H1 (cell line): ENCODE measurements at regions of chr16 and their contacts with region 1.

Region 1: DNA sequence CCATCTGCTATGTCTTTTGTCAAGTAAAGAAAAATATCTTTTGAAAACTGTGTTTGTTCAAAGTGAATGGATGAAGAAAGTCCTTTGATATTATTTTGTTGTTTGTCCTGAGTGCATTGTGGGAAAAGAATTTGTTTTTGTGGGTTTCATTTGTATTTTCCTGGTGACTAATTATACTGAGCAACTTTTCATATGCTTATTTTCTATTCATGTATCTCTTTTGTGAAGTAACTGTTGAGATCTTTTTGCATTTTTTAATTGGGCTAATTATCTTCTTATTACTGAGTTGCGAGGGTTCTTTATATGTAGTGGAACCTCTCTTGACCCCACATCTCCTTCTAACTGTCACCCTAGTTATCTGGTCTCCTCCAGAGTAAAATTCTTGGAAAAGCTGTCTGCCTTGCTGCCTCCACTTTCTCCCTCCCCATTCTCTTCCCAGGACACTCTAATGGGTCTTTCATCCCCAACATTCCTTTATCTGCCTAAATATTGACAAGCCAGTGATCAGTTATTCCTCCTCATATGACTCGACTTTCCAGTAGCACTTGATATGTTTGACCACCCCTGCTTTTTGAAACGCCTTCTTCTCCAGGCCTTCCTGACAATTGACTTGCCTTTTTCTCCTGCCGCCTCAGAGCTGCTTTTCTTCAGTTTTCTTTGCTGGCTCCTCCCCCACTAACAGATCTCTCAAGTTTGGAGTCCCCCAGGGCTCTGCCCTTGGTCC is 117.6 kb upstream of the HAS3 start:
- DNase-seq: no peak
- H3K4me3 ChIP-seq: no peak overlapping the region
- H3K27ac ChIP-seq: no peak overlapping the region
- H3K4me1 ChIP-seq: peaks cover 0 to 9% (median 5%) of the 10 kb centered on the region in 4 experiments; a peak in 2 of 7 replicates
- H3K27me3 ChIP-seq: no peaks in the 10 kb centered on the region
- CTCF ChIP-seq: no peak
- EP300 ChIP-seq: no peak
- POLR2A ChIP-seq: no peak
- RAD21 ChIP-seq: no peak; a peak in 1 of 4 replicates

Region 2: GRCh38 chr16:68972720-68973119 is 15.2 kb before region 1 on chr16:
- CTCF ChIA-PET with region 1: interaction called, 34 read pairs
- POLR2A ChIA-PET with region 1: interaction called, 6 read pairs
- DNase-seq: peak; percentile 63 to 67
- H3K4me3 ChIP-seq: peak overlapping the region in 1 of 4 experiments; percentile 25; a peak in 3 of 8 replicates
- H3K27ac ChIP-seq: no peak overlapping the region
- H3K4me1 ChIP-seq: peaks cover 10 to 20% (median 11%) of the 10 kb centered on the region in 4 experiments
- H3K27me3 ChIP-seq: no peaks in the 10 kb centered on the region
- CTCF ChIP-seq: peak; percentile 48 to 63 (median 60)
- EP300 ChIP-seq: no peak
- POLR2A ChIP-seq: no peak
- RAD21 ChIP-seq: peak; percentile 47 to 49

Region 3: DNA sequence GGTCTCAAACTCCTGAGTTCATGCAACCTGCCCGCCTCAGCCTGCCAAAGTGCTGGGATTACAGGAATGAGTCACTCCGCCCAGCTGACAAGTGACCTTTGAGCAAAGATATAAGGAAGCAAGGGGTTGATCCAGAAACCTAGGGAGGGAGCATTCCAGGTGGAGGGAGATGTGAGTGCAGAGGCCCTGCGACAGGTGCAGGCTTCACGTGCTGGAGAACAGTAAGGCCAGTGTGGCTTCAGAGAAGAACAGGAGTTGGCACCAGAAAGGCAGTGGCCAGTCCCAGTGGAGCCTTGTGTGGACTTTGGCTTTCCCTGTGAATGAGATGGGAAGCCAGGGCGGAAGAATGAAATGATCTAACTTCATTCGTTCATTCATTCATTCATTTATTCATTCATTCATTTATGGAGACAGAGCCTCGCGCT is 44.0 kb after region 1 on chr16:
- CTCF ChIA-PET with region 1: interaction called, 13 read pairs
- POLR2A ChIA-PET with region 1: no interaction called
- DNase-seq: no peak
- H3K4me3 ChIP-seq: no peak overlapping the region
- H3K27ac ChIP-seq: no peak overlapping the region
- H3K4me1 ChIP-seq: no peaks in the 10 kb centered on the region
- H3K27me3 ChIP-seq: no peaks in the 10 kb centered on the region
- CTCF ChIP-seq: no peak
- EP300 ChIP-seq: no peak
- POLR2A ChIP-seq: no peak
- RAD21 ChIP-seq: no peak

Region 4: DNA sequence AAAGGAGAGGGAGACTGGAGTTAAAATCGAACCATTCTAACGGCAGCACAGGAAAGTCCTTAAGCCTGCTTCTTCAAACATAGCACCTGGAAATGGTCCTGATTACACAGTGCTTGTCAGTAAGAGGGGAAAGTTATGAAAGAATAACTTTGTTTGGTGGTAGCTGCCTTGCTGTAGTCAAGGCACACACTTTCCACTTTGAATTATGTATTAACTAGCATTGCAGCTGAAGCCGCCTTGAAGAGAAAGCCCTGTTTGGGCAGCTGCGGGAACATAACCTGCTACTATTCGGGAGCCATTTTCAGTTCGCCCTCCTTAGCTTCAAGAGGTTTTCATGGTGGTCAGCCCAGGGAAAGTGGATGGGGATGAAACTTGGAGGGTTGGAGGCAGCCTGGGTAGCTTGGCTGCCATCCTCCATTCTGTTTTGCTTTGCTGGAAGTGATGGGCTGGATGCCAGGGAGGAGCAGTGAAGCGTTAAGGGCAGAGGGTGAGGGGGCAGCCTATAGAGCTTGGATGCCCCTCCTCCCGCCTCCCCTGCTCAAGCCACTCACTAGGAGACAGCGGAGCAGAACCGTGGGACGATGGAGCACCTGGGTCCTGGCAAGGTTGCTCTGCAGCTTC is 112.3 kb after region 1 on chr16:
- CTCF ChIA-PET with region 1: interaction called, 23 read pairs
- POLR2A ChIA-PET with region 1: interaction called, 23 read pairs
- DNase-seq: no peak
- H3K4me3 ChIP-seq: no peak overlapping the region
- H3K27ac ChIP-seq: no peak overlapping the region
- H3K4me1 ChIP-seq: peaks cover 15 to 27% (median 19%) of the 10 kb centered on the region in 4 experiments
- H3K27me3 ChIP-seq: no peaks in the 10 kb centered on the region; a peak in 1 of 7 replicates
- CTCF ChIP-seq: no peak
- EP300 ChIP-seq: no peak
- POLR2A ChIP-seq: no peak
- RAD21 ChIP-seq: no peak

Region 5: GRCh38 chr16:69123910-69124309 is 136.0 kb after region 1 on chr16:
- CTCF ChIA-PET with region 1: interaction called, 33 read pairs
- POLR2A ChIA-PET with region 1: no interaction called
- DNase-seq: no peak
- H3K4me3 ChIP-seq: no peak overlapping the region
- H3K27ac ChIP-seq: no peak overlapping the region
- H3K4me1 ChIP-seq: no peaks in the 10 kb centered on the region
- H3K27me3 ChIP-seq: no peaks in the 10 kb centered on the region
- CTCF ChIP-seq: peak in 2 of 3 experiments; percentile 68; a peak in 3 of 4 replicates
- EP300 ChIP-seq: no peak
- POLR2A ChIP-seq: no peak
- RAD21 ChIP-seq: peak; percentile 81 to 85